Activated CD4-positive, alpha-beta T cell treated with anti-CD3 and anti-CD28 coated beads, Interleukin-2, amount 10 ng/mL, durations not matched to agents 24 days and 14 days (primary cell): ENCODE measurements at regions of chr1 and their contacts with region 1.

Region 1: GRCh38 chr1:212752252-212752933 is 39.2 kb downstream of the NSL1 start:
- DNase-seq: no peak
- H3K4me3 Mint-ChIP-seq: no peak overlapping the region
- H3K27ac Mint-ChIP-seq: no peak overlapping the region
- H3K4me1 Mint-ChIP-seq: peaks cover 32% of the 10 kb centered on the region
- H3K27me3 Mint-ChIP-seq: no peaks in the 10 kb centered on the region

Region 2: DNA sequence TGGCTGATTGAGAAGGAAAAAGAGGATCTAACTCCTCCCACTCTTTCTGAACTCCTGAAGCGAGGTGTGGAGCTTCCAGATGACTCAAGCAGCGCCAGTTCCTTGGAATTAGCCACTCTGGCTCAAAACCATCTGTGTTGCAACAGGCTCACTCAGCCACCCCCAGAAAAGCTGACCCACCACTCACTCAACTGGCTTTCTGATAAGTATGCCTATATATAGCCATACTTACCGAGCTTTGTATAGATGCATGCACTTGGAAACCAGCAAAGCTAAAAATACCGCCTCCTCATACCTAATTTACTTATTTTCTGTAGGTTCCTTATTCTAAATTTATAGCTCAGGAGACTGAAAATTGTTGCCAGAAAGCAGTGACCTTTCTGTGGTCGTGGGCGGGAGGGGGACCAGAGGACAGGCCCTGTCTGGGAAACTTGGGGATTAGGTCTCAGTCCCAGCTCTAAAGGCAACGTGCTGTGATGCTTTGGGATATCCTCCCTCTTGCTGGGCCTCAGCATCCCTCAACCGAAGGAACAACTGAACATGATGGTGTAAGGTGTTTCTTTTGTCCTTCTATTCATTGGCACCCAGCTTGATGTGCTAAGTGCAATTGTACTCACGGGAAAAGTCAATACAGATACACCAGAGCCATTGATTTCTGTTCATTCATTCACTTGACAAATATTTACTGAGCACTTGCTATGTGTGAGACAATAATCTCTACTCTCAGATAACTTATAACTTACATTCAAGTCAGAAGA is 253.9 kb before region 1 on chr1:
- intact Hi-C with region 1: no loop called
- DNase-seq: no peak
- H3K4me3 Mint-ChIP-seq: no peak overlapping the region
- H3K27ac Mint-ChIP-seq: no peak overlapping the region
- H3K4me1 Mint-ChIP-seq: no peaks in the 10 kb centered on the region
- H3K27me3 Mint-ChIP-seq: peaks cover 18% of the 10 kb centered on the region

Region 3: DNA sequence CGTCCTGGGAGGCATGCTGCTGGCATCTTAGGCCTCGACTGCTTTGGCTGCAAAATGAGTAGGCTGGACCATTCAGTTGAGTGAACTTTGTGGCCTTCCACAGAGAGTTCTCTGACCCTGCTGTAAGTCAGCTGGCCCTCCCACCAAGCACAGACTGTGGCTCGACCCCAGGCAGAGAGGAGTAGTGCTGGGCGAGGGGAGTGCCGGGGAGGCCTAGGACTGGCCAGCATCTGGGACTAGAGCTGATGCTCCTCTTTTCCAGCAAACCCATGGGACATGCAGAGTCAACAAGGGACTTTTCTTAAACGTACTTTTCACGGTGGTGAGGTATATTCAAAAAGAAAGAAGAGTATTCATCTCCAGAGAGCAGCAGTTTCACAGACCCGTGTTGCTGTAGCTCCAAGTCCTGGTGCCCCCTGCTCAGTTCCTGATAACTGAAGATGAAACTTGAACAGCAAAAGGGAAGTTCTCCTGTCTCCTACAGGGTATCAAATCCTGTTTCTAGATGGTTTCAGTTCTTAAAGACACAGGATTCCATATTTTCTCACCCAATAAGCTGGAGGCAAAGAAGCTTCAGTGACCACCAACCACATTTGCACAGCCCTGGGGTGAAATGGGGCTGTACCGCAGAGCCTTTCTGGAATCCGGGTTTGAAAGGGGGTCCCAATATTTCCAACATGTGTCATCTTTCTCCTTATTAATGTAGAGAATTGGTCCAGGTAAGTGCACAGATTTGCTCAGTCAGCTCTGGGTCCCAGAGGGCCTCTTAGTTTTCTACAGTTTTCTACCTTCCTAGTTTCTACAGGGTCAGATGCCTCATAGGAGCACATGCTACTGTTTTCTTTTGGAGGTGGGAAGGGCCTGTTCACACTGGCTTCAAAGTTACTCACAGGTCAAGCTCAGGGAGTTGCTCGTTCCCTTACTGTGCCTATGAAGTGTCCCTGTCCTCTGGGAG is 73.7 kb before region 1 on chr1:
- intact Hi-C with region 1: loop called (anchors 2 kb)
- DNase-seq: no peak
- H3K4me3 Mint-ChIP-seq: no peak overlapping the region
- H3K27ac Mint-ChIP-seq: peak overlapping the region; percentile 84
- H3K4me1 Mint-ChIP-seq: peaks cover 53% of the 10 kb centered on the region
- H3K27me3 Mint-ChIP-seq: peaks cover 2% of the 10 kb centered on the region

Region 4: DNA sequence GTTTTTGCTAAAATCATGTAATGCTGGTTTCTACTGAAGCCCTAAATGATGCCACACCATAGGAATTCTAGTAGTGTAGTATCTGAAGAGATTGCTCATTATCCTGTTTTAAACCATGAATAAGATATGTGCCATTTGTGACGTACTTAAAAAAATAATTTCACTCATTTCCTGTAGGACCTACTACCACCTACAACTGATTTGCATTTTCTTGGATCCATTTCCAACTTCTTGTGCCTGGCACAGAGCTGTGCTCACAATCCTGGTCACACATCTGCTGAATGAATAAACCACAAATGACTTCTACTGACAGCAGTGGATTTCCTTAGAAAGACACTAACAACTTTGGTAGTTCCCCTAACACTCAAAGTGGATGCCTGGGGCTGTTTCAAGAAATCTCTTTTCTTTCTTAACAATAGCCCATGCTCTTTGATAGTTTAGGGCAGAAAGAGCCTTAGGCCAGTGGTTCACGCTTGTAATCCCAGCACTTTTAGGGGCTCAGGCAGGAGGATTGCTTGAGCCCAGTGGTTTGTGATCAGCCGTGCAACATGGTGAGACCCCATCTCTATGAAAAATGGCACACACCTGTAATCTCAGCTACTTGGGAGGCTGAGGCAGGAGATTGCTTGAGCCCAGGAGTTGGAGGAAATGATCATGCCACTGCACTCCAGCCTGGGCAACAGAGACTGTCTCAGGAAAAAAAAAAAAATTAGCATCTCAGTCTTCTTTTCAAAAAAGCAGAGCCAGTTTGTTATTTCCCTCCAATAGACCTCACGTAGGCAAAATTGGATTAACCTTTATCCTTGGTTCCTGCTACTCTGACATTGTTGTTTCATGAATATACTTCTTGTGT is 39.7 kb before region 1 on chr1:
- intact Hi-C with region 1: loop called (anchors 2 kb)
- DNase-seq: no peak
- H3K4me3 Mint-ChIP-seq: no peak overlapping the region
- H3K27ac Mint-ChIP-seq: peak overlapping the region; percentile 56
- H3K4me1 Mint-ChIP-seq: peaks cover 26% of the 10 kb centered on the region
- H3K27me3 Mint-ChIP-seq: peaks cover 9% of the 10 kb centered on the region

Region 5: DNA sequence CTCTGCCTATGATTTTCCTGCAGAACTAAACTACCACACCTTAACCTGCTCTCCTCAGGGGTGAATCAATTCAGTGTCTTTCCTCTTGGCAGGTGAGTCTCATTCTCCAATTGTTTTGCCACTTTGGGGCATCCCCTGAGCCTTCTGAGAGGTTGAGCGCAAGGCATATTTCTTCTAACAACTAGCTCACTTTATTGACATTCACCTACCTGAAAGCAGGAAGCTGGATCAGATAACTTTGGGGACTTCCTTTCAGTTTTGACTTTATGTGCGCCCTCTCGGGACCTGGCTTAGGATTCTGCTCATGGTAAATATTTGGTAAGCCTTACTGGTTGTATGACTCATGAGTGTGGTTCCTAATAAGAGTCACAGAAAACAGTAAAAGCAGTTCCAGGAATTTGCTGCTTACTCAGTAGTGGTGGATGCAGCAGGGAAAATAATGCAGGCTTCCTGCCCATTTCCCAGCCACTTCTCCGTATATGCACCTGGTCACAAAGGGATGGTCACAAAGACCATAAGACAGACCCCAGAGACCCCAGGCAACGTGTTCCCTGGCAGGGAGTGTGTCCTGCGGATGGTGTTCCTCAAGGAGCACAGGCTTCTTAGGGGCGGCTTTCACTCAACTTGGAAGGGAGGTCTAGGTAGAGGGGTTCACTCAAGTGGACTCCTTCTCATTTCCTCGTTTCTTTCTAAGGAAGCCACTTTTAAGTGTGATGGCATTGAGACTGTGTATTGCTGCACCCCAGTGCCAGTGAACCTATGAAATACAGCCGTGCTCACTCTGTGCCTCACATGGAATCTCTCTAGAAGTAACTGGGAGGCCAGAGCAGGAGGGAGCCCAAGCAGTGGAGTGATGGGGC is 30.8 kb before region 1 on chr1:
- intact Hi-C with region 1: loop called (anchors 2 kb)
- DNase-seq: peak; percentile 83
- H3K4me3 Mint-ChIP-seq: peak overlapping the region; percentile 69
- H3K27ac Mint-ChIP-seq: peak overlapping the region; percentile 78
- H3K4me1 Mint-ChIP-seq: peaks cover 34% of the 10 kb centered on the region
- H3K27me3 Mint-ChIP-seq: peaks cover 14% of the 10 kb centered on the region

Region 6: GRCh38 chr1:212738330-212738729 is 14.1 kb before region 1 on chr1:
- intact Hi-C with region 1: loop called (anchors 2 kb)
- DNase-seq: no peak
- H3K4me3 Mint-ChIP-seq: peak overlapping the region; percentile 13
- H3K27ac Mint-ChIP-seq: peak overlapping the region; percentile 73
- H3K4me1 Mint-ChIP-seq: peaks cover 20% of the 10 kb centered on the region
- H3K27me3 Mint-ChIP-seq: no peaks in the 10 kb centered on the region

Region 7: DNA sequence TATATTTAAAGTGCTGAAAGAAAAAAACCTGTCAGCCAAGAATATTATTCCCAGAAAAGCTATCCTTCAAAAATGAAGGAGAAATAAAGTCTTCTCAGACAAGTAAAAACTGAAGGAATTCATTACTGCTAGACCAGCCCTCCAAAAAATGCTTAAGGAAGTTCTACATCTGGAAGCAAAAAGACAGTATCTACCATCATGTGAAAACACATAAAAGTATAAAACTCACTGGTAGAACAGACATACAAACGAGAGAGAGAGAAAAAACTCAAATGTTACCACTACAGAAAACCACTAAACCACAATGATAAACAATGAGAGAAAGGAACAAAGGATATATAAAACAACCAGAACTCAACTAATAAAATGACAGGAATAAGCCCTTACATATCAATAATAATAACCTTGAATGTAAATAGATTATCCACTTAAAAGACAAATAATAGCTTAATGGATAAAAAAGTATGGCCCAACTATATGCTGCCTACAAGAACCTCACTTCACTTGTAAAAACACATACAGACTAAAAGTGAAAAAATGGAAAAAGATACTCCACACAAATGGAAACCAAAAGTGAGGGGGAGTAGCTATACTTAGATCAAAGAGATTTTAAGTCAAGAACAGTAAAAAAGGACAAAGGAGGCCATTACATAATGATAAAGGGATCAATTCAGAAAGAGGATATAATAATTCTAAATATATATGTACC is 17.2 kb after region 1 on chr1:
- intact Hi-C with region 1: loop called (anchors 1 kb)
- DNase-seq: no peak
- H3K4me3 Mint-ChIP-seq: peak overlapping the region; percentile 50
- H3K27ac Mint-ChIP-seq: peak overlapping the region; percentile 81
- H3K4me1 Mint-ChIP-seq: peaks cover 44% of the 10 kb centered on the region
- H3K27me3 Mint-ChIP-seq: no peaks in the 10 kb centered on the region